Keratinocyte (primary cell): ENCODE measurements at regions of chr12 and their contacts with region 1.

Region 1: GRCh38 chr12:57576613-57577160 is 14.3 kb upstream of the PIP4K2C start:
- DNase-seq: no peak
- H3K4me3 ChIP-seq: no peak overlapping the region
- H3K27ac ChIP-seq: no peak overlapping the region
- H3K4me1 ChIP-seq: no peaks in the 10 kb centered on the region
- H3K27me3 ChIP-seq: peaks cover 6% of the 10 kb centered on the region
- CTCF ChIP-seq: no peak

Region 2: GRCh38 chr12:57323416-57323815 is 253.3 kb before region 1 on chr12:
- dilution Hi-C with region 1: no loop called
- DNase-seq: no peak
- H3K4me3 ChIP-seq: no peak overlapping the region
- H3K27ac ChIP-seq: no peak overlapping the region
- H3K4me1 ChIP-seq: no peaks in the 10 kb centered on the region
- H3K27me3 ChIP-seq: no peaks in the 10 kb centered on the region
- CTCF ChIP-seq: no peak

Region 3: GRCh38 chr12:57632694-57633477 is 56.2 kb after region 1 on chr12 and contains the start of gene B4GALNT1:
- dilution Hi-C with region 1: loop called (anchors 10 kb)
- DNase-seq: no peak
- H3K4me3 ChIP-seq: peak within 1 kb of the TSS; percentile 43 to 69 (median 60)
- H3K27ac ChIP-seq: no peak within 1 kb of the TSS
- H3K4me1 ChIP-seq: peaks cover 2% of the 10 kb centered on the region
- H3K27me3 ChIP-seq: peaks cover 57% of the 10 kb centered on the region
- CTCF ChIP-seq: peak; percentile 76 to 88 (median 78)
- polyA plus RNA-seq, gene B4GALNT1: 0.08 to 0.37 TPM (median 0.08 TPM) in 3 replicates